ENCODE measurements at regions of chr3 and their contacts with region 1.

Region 1: DNA sequence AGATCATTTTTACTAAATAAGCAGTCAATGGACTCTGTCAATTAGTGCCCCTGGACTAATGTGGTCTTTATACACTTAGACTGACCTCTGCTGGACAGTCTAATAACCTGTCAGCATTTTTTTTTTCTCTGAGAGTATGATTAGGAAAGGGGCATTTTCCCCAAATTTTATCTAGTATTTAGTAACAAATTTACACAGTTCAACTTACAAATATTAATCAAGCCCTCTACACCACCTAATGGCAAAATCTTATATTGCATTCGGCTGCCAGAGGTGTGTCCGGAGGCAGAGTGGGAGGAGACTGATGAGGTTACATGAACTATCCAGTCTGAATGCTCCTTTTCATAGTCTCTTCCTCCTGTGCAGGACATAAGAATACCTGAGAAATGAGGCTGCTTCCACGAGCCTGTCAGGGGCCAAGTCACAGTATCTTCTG is 36.0 kb upstream of the COLQ start:
- DNase-seq: peak; percentile 52 to 81 (median 64)
- ATAC-seq: peak; percentile 98
- H3K4me3 ChIP-seq: no peak overlapping the region
- H3K27ac ChIP-seq: no peak overlapping the region; the same call in 2 of the 3 replicates
- H3K4me1 ChIP-seq: peaks cover 0 to 8% of the 10 kb centered on the region in 2 experiments; a peak in 2 of 5 replicates
- H3K27me3 ChIP-seq: no peaks in the 10 kb centered on the region
- CTCF ChIP-seq: peak; percentile 43 to 73 (median 68)
- EP300 ChIP-seq: no peak
- POLR2A ChIP-seq: no peak
- RAD21 ChIP-seq: peak; percentile 77 to 83

Region 2: GRCh38 chr3:15113463-15113862 is 444.1 kb before region 1 on chr3:
- CTCF ChIA-PET with region 1: interaction called, 4 read pairs
- POLR2A ChIA-PET with region 1: interaction called, 4 read pairs
- in situ Hi-C with region 1: loop called (anchors 5 kb)
- intact Hi-C with region 1: loop called (anchors 5 kb)
- DNase-seq: no peak
- ATAC-seq: no peak
- H3K4me3 ChIP-seq: no peak overlapping the region
- H3K27ac ChIP-seq: no peak overlapping the region
- H3K4me1 ChIP-seq: peaks cover 1 to 2% of the 10 kb centered on the region in 2 experiments; a peak in 3 of 5 replicates
- H3K27me3 ChIP-seq: peaks cover 0 to 4% of the 10 kb centered on the region in 2 experiments; a peak in 2 of 5 replicates
- CTCF ChIP-seq: no peak
- EP300 ChIP-seq: no peak
- POLR2A ChIP-seq: no peak
- RAD21 ChIP-seq: no peak

Region 3: GRCh38 chr3:15384510-15385237 is 172.9 kb before region 1 on chr3:
- CTCF ChIA-PET with region 1: no interaction called
- POLR2A ChIA-PET with region 1: no interaction called
- in situ Hi-C with region 1: no loop called
- intact Hi-C with region 1: loop called (anchors 5 kb)
- DNase-seq: no peak
- ATAC-seq: no peak
- H3K4me3 ChIP-seq: no peak overlapping the region
- H3K27ac ChIP-seq: no peak overlapping the region
- H3K4me1 ChIP-seq: peaks cover 0 to 8% of the 10 kb centered on the region in 2 experiments; a peak in 2 of 5 replicates
- H3K27me3 ChIP-seq: no peaks in the 10 kb centered on the region; a peak in 1 of 5 replicates
- CTCF ChIP-seq: no peak
- EP300 ChIP-seq: no peak
- POLR2A ChIP-seq: no peak
- RAD21 ChIP-seq: no peak

Region 4: GRCh38 chr3:15405448-15406050 is 152.0 kb before region 1 on chr3:
- CTCF ChIA-PET with region 1: no interaction called
- POLR2A ChIA-PET with region 1: no interaction called
- in situ Hi-C with region 1: no loop called
- intact Hi-C with region 1: loop called (anchors 5 kb)
- DNase-seq: peak; percentile 62 to 76 (median 63)
- ATAC-seq: peak; percentile 89
- H3K4me3 ChIP-seq: no peak overlapping the region
- H3K27ac ChIP-seq: no peak overlapping the region
- H3K4me1 ChIP-seq: no peaks in the 10 kb centered on the region
- H3K27me3 ChIP-seq: no peaks in the 10 kb centered on the region
- CTCF ChIP-seq: peak; percentile 62 to 88 (median 72)
- EP300 ChIP-seq: no peak
- POLR2A ChIP-seq: no peak
- RAD21 ChIP-seq: peak; percentile 77 to 92

Region 5: GRCh38 chr3:15428539-15428938 is 129.0 kb before region 1 on chr3:
- CTCF ChIA-PET with region 1: no interaction called
- POLR2A ChIA-PET with region 1: no interaction called
- in situ Hi-C with region 1: no loop called
- intact Hi-C with region 1: loop called (anchors 2 kb)
- DNase-seq: peak in 2 of 4 experiments; percentile 26 to 37
- ATAC-seq: peak; percentile 14
- H3K4me3 ChIP-seq: peak overlapping the region; percentile 80
- H3K27ac ChIP-seq: no peak overlapping the region
- H3K4me1 ChIP-seq: peaks cover 3 to 9% of the 10 kb centered on the region in 2 experiments; a peak in 4 of 5 replicates
- H3K27me3 ChIP-seq: no peaks in the 10 kb centered on the region
- CTCF ChIP-seq: no peak
- EP300 ChIP-seq: no peak
- POLR2A ChIP-seq: no peak
- RAD21 ChIP-seq: no peak

Region 6: DNA sequence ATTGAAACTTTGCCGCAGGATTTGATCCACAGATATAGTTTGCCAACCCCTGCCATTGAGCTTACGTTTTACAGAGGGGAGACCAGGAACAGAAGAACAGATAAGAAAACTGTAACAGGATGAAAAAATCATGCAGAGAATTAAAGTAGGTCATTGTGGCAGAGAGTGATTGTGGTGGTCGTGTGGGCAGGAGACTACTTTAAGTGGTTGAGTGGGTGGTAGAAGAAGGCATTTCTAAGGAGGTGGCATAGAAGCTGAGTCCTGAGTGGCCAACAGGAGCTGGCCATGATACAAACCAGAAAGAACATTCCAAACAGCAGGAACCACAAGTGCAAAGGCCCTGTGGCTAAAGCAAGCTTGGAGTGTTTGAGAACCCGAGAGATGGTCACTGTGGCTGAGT is 70.5 kb before region 1 on chr3:
- CTCF ChIA-PET with region 1: no interaction called
- POLR2A ChIA-PET with region 1: no interaction called
- in situ Hi-C with region 1: no loop called
- intact Hi-C with region 1: no loop called
- DNase-seq: no peak
- ATAC-seq: no peak
- H3K4me3 ChIP-seq: no peak overlapping the region
- H3K27ac ChIP-seq: no peak overlapping the region
- H3K4me1 ChIP-seq: no peaks in the 10 kb centered on the region
- H3K27me3 ChIP-seq: peaks cover 23 to 43% of the 10 kb centered on the region in 2 experiments
- CTCF ChIP-seq: no peak
- EP300 ChIP-seq: no peak
- POLR2A ChIP-seq: no peak
- RAD21 ChIP-seq: no peak